ENCODE measurements at regions of chr13 and their contacts with region 1.

Region 1: GRCh38 chr13:59677966-59678814 is 485.5 kb downstream of the DIAPH3 start:
- DNase-seq: peak; percentile 29
- CTCF ChIP-seq: peak; percentile 60

Region 2: GRCh38 chr13:59391696-59392095 is 286.5 kb before region 1 on chr13:
- CTCF ChIA-PET with region 1: interaction called, 35 read pairs
- POLR2A ChIA-PET with region 1: no interaction called
- DNase-seq: peak; percentile 58
- CTCF ChIP-seq: peak; percentile 80

Region 3: DNA sequence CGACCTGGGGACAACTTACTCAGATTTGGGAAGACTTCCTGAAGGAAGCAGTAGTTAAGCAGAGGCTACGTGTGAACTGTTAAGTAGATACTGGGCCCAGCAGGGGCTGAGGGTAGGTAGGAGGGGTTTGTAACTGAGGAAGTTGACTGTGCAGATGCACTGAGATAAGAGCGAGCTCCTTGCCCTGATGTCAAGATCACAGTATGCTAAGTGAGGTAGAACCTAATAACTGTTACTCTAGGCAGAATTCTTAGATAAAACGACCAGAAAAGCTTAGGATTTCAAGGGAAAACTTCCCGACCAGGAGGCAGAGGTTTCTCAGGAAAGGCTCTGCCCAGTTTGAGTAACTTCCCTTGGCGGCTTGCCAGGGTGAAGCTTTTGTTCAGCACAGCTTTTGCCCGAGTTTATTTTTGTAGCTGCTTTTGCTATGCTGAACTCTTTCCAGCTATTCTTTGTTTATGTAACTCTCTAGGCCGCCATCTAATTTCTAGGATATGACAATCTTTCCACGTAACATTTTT is 146.6 kb before region 1 on chr13:
- CTCF ChIA-PET with region 1: no interaction called
- POLR2A ChIA-PET with region 1: no interaction called
- DNase-seq: no peak
- CTCF ChIP-seq: no peak

Region 4: DNA sequence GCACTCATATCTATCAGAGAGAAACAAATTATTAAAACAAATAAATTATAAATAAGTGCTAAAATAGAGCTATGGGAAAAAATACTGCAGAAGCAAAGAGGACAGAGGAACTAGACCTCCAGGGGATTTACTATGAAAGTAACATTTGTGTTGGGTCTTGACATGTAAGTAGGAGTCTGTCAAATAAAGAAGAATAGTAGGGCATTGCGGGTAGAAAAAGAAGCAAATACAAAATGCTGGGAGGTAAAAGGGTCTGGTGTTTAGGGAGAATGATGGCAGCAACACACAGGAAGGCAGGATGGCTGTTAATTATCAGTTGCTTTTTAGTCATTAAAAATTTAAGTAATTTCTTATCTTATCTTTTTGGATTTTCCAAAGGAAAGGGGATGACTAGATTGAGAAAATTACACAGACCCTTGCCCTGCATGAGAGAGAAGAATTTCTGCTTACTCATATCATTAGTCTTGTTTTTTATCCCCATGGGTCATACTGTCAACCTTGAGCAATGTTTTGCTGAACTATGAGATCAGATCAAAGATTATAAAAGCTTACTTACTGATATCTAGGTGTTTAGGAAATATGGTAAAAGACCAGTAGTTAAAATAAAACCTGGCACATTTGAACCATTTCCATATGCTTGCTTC is 12.8 kb after region 1 on chr13:
- CTCF ChIA-PET with region 1: interaction called, 26 read pairs
- POLR2A ChIA-PET with region 1: no interaction called
- DNase-seq: no peak
- CTCF ChIP-seq: no peak

Region 5: GRCh38 chr13:59771272-59771671 is 93.1 kb after region 1 on chr13:
- CTCF ChIA-PET with region 1: interaction called, 13 read pairs
- POLR2A ChIA-PET with region 1: no interaction called
- DNase-seq: no peak
- CTCF ChIP-seq: peak; percentile 29

Region 6: DNA sequence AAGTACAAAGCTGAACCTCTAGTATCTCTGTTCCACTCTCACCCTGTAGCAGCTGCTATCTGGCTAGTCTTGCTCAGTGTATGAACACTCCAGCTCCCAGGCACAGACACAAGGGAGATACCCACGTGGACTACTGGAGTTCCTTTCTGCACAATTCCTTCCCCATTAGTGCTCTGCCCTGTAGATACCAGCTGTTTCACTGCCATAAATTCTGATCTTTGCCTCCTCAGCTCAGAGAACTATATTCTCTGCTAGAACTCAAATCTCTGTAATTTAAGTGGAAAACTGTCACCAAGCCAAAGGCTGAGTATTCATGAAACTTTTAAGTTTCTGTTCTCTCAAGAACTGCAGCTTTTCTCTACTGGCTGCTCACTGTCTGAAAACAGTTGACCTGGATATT is 211.9 kb after region 1 on chr13:
- CTCF ChIA-PET with region 1: no interaction called
- POLR2A ChIA-PET with region 1: no interaction called
- DNase-seq: no peak
- CTCF ChIP-seq: no peak

Region 7: GRCh38 chr13:60329221-60329983 is 651.2 kb after region 1 on chr13:
- CTCF ChIA-PET with region 1: interaction called, 22 read pairs
- POLR2A ChIA-PET with region 1: no interaction called
- DNase-seq: peak; percentile 36
- CTCF ChIP-seq: peak; percentile 60

Measured in GM10248 (cell line).